Calu3 (cell line): ENCODE measurements at regions of chr20 and their contacts with region 1.

Region 1: GRCh38 chr20:18466894-18467730 is at the starts of genes DZANK1 and POLR3F:
- DNase-seq: peak; percentile 80
- H3K4me3 Mint-ChIP-seq: peak within 1 kb of the TSS; percentile 81
- H3K27ac Mint-ChIP-seq: peak within 1 kb of the TSS; percentile 79
- H3K4me1 Mint-ChIP-seq: no peaks in the 10 kb centered on the region
- H3K27me3 Mint-ChIP-seq: no peaks in the 10 kb centered on the region
- CTCF ChIP-seq: no peak
- total RNA-seq, gene DZANK1: 0.86 and 1.0 TPM in 2 replicates
- total RNA-seq, gene POLR3F: 4.1 and 4.2 TPM in 2 replicates

Region 2: DNA sequence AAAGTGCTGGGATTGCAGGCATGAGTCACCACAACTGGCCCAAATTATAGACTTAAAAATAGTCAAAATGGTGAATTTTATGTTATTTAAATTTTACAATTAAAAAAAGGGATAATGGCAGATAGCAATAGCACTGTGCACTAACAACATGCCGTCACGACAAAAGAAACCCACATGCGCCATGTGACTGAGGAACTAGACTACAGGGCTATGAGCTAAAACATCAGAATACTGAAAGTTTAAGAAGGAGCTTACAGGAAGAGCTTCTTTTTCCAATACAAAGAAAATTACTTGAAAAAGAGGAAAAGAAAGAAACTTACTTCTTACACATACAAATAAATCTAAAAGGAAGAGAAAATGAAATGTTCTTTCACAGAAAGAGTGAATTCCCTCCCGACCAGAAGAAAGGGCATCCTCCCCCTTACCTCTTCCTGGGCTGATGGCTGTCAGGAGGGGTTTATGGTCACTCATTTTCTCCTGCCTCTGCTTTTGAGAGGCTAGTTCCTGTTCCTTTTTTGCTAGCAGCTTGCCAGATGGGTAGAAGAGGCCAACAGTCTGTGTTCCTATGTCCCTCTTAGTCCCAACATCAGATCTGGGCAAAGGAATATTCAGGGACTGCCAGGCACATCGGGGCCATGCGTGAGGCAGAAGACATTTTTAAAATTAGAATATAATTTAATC is 54.8 kb before region 1 on chr20:
- CTCF ChIA-PET with region 1: no interaction called
- intact Hi-C with region 1: loop called (anchors 10 kb)
- DNase-seq: no peak
- H3K4me3 Mint-ChIP-seq: no peak overlapping the region
- H3K27ac Mint-ChIP-seq: no peak overlapping the region
- H3K4me1 Mint-ChIP-seq: no peaks in the 10 kb centered on the region
- H3K27me3 Mint-ChIP-seq: no peaks in the 10 kb centered on the region
- CTCF ChIP-seq: no peak

Region 3: DNA sequence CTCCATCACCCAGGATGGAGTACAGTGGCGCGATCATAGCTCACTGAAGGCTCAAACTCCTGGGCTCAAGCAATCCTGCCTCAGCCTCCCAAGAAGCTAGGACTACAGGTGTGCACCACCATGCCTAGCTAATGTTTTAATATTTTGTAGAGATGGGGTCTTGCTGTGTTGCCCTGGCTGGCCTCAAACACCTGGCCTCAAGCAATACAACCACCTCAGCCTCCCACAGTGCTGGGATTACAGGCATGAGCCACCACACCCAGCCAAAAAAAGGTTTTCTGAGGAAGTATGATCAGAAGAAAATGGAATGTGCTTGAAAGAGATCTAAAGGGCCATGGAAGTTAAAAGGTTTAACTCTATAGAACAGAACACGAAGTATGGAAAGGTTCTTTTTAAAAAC is 21.2 kb after region 1 on chr20:
- CTCF ChIA-PET with region 1: no interaction called
- intact Hi-C with region 1: no loop called
- DNase-seq: no peak
- H3K4me3 Mint-ChIP-seq: no peak overlapping the region
- H3K27ac Mint-ChIP-seq: no peak overlapping the region
- H3K4me1 Mint-ChIP-seq: no peaks in the 10 kb centered on the region
- H3K27me3 Mint-ChIP-seq: no peaks in the 10 kb centered on the region
- CTCF ChIP-seq: no peak